Breast epithelium (tissue), 4 donors: ENCODE measurements at regions of chr20 and their contacts with region 1.

Region 1: DNA sequence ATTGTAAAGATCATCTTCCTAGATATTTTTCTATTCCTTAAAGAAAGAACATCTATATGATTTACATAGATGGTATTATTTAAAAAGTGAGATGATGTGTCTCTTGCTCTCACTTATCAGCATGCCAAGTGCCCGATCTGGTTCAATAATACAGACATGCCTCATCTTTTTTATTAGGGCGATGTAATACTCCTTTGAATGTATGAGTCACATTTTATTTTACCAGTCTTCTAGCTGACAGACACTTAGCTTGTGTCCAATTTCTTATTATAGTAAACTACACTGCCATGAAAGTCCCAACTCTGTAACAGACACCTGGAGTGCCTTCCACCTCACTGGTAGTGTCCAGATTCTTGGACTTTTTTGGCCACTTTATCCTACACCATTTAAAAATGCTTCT is 586.6 kb upstream of the BTBD3 start:
- DNase-seq: no peak
- H3K4me3 ChIP-seq: no peak overlapping the region
- H3K27ac ChIP-seq: no peak overlapping the region
- H3K4me1 ChIP-seq: no peaks in the 10 kb centered on the region
- H3K27me3 ChIP-seq: no peaks in the 10 kb centered on the region
- CTCF ChIP-seq: no peak
- POLR2A ChIP-seq: no peak

Region 2: GRCh38 chr20:11305406-11305805 is 25.7 kb before region 1 on chr20:
- intact Hi-C with region 1: no loop called
- DNase-seq: no peak
- H3K4me3 ChIP-seq: no peak overlapping the region
- H3K27ac ChIP-seq: no peak overlapping the region
- H3K4me1 ChIP-seq: no peaks in the 10 kb centered on the region
- H3K27me3 ChIP-seq: no peaks in the 10 kb centered on the region
- CTCF ChIP-seq: no peak
- POLR2A ChIP-seq: no peak

Region 3: DNA sequence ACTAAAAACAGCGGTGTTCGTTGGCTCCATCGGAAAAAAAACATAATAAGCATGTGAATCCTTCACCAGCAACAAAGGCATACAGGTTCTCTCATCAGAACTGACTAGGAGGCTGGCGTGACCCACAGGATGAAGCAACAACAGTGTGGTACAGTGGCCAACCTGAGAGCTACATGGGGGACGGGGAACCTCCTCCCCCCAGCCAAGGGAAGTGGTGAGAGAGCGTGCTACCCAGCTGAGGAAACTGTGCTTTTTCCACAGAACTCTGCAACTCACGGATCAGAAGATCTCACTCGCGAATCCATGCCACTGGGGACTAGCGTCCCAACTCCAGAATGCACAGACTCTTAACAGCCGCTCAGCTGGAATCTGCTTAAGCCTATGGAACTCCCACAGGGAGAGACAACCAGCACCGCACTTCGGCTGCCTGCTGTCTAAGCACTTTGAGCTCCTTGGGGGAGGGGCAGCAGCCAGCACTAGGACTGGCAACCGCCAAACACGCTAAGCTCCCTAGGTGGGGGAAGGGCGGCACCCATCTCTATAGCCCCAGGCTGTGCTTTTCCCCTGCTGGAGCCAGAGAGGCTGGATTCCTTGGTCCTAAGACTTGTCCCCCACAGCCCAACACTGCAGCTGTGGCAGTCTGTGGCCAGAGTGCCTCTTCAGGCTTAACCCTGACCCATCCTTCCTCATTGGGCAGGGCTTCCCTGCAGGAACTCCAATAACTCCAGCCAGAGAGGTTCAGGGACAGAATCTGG is 48.3 kb after region 1 on chr20:
- intact Hi-C with region 1: no loop called
- DNase-seq: no peak
- H3K4me3 ChIP-seq: no peak overlapping the region
- H3K27ac ChIP-seq: no peak overlapping the region
- H3K4me1 ChIP-seq: no peaks in the 10 kb centered on the region
- H3K27me3 ChIP-seq: no peaks in the 10 kb centered on the region
- CTCF ChIP-seq: no peak
- POLR2A ChIP-seq: no peak

Region 4: GRCh38 chr20:11992426-11992825 is 661.3 kb after region 1 on chr20:
- intact Hi-C with region 1: no loop called
- DNase-seq: no peak
- H3K4me3 ChIP-seq: no peak overlapping the region
- H3K27ac ChIP-seq: no peak overlapping the region
- H3K4me1 ChIP-seq: no peaks in the 10 kb centered on the region
- H3K27me3 ChIP-seq: no peaks in the 10 kb centered on the region
- CTCF ChIP-seq: no peak
- POLR2A ChIP-seq: no peak

Region 5: GRCh38 chr20:12153628-12154027 is 822.5 kb after region 1 on chr20:
- intact Hi-C with region 1: loop called (anchors 5 kb)
- DNase-seq: no peak
- H3K4me3 ChIP-seq: no peak overlapping the region
- H3K27ac ChIP-seq: no peak overlapping the region
- H3K4me1 ChIP-seq: no peaks in the 10 kb centered on the region
- H3K27me3 ChIP-seq: no peaks in the 10 kb centered on the region
- CTCF ChIP-seq: no peak
- POLR2A ChIP-seq: no peak

Region 6: DNA sequence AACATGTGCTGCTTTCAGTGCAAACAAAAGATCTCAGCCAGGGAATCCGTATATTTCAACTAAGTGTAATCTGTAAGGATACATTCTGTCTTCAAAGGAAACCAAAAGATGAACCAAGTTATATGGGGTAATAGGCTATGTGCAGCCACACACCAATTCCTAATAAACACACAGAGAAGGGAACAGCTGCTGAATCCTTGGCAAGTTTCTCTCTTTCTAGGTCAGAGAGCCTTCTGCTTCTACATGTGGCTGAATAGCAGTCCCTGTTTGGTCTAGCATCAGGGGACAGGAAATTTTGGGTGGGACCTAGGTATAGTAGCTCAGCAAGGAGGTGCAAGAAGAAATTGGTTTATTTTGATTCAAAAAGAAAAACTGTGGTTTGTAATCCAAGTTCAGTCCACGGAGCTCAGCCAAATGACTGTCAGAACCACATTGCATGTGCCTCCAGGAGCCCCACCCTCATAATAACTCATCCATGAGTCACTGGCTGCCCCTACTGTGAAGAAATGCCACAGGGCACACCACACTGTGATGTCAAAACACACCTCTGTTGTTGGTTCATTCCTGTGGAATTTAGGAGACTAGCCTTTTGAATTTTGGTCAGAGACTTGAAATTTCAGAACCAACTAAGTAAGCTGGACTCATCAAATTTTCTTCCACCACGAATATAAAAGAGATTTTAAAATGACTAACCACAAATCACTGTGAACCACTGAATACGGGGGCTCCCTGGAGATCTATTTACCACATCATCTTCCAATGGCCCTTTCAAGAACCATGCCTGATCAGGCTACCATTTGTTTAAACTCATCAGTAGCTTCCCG is 1698.8 kb after region 1 on chr20:
- intact Hi-C with region 1: no loop called
- DNase-seq: peak in 1 of 2 donors; percentile 81
- H3K4me3 ChIP-seq: no peak overlapping the region
- H3K27ac ChIP-seq: peak overlapping the region; percentile 13 to 69
- H3K4me1 ChIP-seq: no peaks in the 10 kb centered on the region
- H3K27me3 ChIP-seq: no peaks in the 10 kb centered on the region
- CTCF ChIP-seq: no peak
- POLR2A ChIP-seq: no peak